Heart right ventricle (tissue), 16 donors: ENCODE measurements at regions of chr2 and their contacts with region 1.

Region 1: GRCh38 chr2:170493426-170494097 is 221.6 kb upstream of the SP5 start:
- DNase-seq: no peak
- ATAC-seq: no peak
- H3K4me3 ChIP-seq: no peak overlapping the region
- H3K27ac ChIP-seq: no peak overlapping the region
- H3K4me1 ChIP-seq: peaks cover 0 to 5% (median 0%) of the 10 kb centered on the region in 9 donors
- H3K27me3 ChIP-seq: peaks cover 0 to 12% (median 6%) of the 10 kb centered on the region in 7 donors
- CTCF ChIP-seq: no peak

Region 2: GRCh38 chr2:170587922-170588321 is 94.4 kb after region 1 on chr2:
- intact Hi-C with region 1: no loop called
- DNase-seq: no peak
- ATAC-seq: no peak
- H3K4me3 ChIP-seq: no peak overlapping the region
- H3K27ac ChIP-seq: no peak overlapping the region
- H3K4me1 ChIP-seq: no peaks in the 10 kb centered on the region
- H3K27me3 ChIP-seq: no peaks in the 10 kb centered on the region
- CTCF ChIP-seq: no peak

Region 3: GRCh38 chr2:170707821-170708795 is 214.5 kb after region 1 on chr2:
- intact Hi-C with region 1: loop called in 3 of 10 experiments (anchors 5 to 10 kb)
- DNase-seq: no peak
- ATAC-seq: no peak
- H3K4me3 ChIP-seq: no peak overlapping the region
- H3K27ac ChIP-seq: no peak overlapping the region
- H3K4me1 ChIP-seq: peaks cover 0 to 14% (median under 1%) of the 10 kb centered on the region in 9 donors
- H3K27me3 ChIP-seq: peaks cover 10 to 74% (median 62%) of the 10 kb centered on the region in 7 donors
- CTCF ChIP-seq: no peak

Region 4: DNA sequence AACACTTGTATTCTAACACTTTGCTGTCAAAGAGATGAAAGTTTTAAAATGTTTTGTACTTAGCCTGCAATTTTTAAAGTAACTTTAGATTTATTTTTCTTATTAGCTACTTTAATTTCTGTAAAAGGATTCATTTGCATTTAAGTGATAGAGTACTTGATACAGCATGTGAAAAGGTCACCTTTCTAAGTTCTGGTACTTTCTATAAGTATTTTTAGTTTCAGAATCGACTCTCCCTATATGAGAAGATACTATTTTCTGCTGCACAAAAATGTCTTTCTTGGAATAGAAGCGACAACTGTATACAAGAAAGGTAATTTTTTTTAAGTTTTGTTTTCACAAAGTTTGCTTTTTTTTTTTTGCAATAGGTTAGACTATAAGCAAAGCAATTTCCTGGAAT is 867.3 kb after region 1 on chr2:
- intact Hi-C with region 1: no loop called
- DNase-seq: no peak
- ATAC-seq: no peak
- H3K4me3 ChIP-seq: no peak overlapping the region
- H3K27ac ChIP-seq: no peak overlapping the region
- H3K4me1 ChIP-seq: no peaks in the 10 kb centered on the region
- H3K27me3 ChIP-seq: no peaks in the 10 kb centered on the region
- CTCF ChIP-seq: no peak